K562 (cell line): ENCODE measurements at regions of chr7 and their contacts with region 1.

Region 1: DNA sequence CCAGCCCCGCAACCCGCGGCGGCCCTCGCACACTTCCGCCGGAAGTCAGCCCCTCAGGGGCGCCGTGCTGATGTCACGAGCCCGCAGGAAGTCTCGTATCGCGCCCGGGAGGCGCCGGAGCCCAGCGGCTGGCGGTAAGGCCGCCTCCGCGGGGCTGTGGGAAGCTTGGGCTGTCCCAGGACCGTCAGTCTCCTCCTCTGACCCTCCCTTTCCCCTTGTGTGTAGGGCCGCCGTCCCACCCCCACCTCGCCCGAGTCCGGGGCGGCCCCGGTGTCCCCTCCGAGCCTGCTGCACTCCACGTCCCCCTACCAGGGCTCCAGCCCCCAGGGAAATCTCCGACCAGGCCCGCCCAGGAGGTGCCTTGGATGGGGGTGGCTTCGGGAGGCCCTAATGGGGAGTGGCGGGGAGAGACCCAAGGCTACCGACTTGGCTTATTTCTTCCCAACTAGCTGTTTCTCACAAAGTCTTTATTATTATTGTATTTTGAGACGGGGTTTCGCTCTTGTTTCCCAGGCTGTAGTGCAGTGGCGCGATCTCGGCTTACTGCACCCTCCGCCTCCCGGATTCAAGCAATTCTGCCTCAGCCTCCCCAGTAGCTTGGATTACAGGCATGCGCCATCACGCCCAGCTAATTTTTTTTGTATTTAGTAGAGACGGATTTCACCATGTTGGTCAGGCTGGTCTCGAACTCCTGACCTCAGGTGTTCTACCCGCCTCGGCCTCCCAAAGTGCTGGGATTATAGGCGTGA is at the start of gene ZDHHC4:
- DNase-seq: peak; percentile 93 to 97 (median 96)
- ATAC-seq: peak; percentile 96
- H3K4me3 ChIP-seq: peak within 1 kb of the TSS; percentile 95
- H3K27ac ChIP-seq: peak within 1 kb of the TSS; percentile 96
- H3K4me1 ChIP-seq: peaks cover 13 to 20% of the 10 kb centered on the region in 2 experiments
- H3K27me3 ChIP-seq: peaks cover 0 to 4% of the 10 kb centered on the region in 2 experiments; a peak in 1 of 5 replicates
- CTCF ChIP-seq: 0 out of 6 replicates have a peak, but pooled peaks of 1 of the 3 experiments have one; percentile 9
- EP300 ChIP-seq: peak; percentile 13; the same call in 1 of the 2 replicates
- POLR2A ChIP-seq: peak; percentile 98
- RAD21 ChIP-seq: no peak
- polyA plus RNA-seq, gene ZDHHC4: 58.9 to 77.0 TPM

Region 2: GRCh38 chr7:5117095-5117970 is 1460.2 kb before region 1 on chr7:
- CTCF ChIA-PET with region 1: no interaction called
- POLR2A ChIA-PET with region 1: no interaction called
- in situ Hi-C with region 1: no loop called
- intact Hi-C with region 1: no loop called
- DNase-seq: peak in 1 of 4 experiments; percentile 12
- ATAC-seq: peak; percentile 56
- H3K4me3 ChIP-seq: no peak overlapping the region
- H3K27ac ChIP-seq: no peak overlapping the region
- H3K4me1 ChIP-seq: peaks cover 0 to 12% of the 10 kb centered on the region in 2 experiments; a peak in 2 of 5 replicates
- H3K27me3 ChIP-seq: peaks cover 33 to 62% of the 10 kb centered on the region in 2 experiments
- CTCF ChIP-seq: no peak
- EP300 ChIP-seq: no peak
- POLR2A ChIP-seq: no peak
- RAD21 ChIP-seq: no peak

Region 3: GRCh38 chr7:5172196-5172775 is 1405.3 kb before region 1 on chr7:
- CTCF ChIA-PET with region 1: no interaction called
- POLR2A ChIA-PET with region 1: no interaction called
- in situ Hi-C with region 1: no loop called
- intact Hi-C with region 1: no loop called
- DNase-seq: no peak
- ATAC-seq: no peak
- H3K4me3 ChIP-seq: no peak overlapping the region
- H3K27ac ChIP-seq: no peak overlapping the region
- H3K4me1 ChIP-seq: no peaks in the 10 kb centered on the region
- H3K27me3 ChIP-seq: peaks cover 6 to 36% of the 10 kb centered on the region in 2 experiments; a peak in 4 of 5 replicates
- CTCF ChIP-seq: no peak
- EP300 ChIP-seq: no peak
- POLR2A ChIP-seq: no peak
- RAD21 ChIP-seq: no peak

Region 4: GRCh38 chr7:6205971-6206660 is 371.4 kb before region 1 on chr7:
- CTCF ChIA-PET with region 1: no interaction called
- POLR2A ChIA-PET with region 1: no interaction called
- in situ Hi-C with region 1: no loop called
- intact Hi-C with region 1: no loop called
- DNase-seq: no peak
- ATAC-seq: peak; percentile 60; the same call in 2 of the 3 replicates
- H3K4me3 ChIP-seq: no peak overlapping the region
- H3K27ac ChIP-seq: no peak overlapping the region
- H3K4me1 ChIP-seq: peaks cover 5 to 9% of the 10 kb centered on the region in 2 experiments; a peak in 3 of 5 replicates
- H3K27me3 ChIP-seq: no peaks in the 10 kb centered on the region
- CTCF ChIP-seq: no peak
- EP300 ChIP-seq: no peak
- POLR2A ChIP-seq: no peak
- RAD21 ChIP-seq: no peak

Region 5: GRCh38 chr7:6589829-6590644 is 12.5 kb after region 1 on chr7 and contains the start of gene INTS15:
- CTCF ChIA-PET with region 1: no interaction called
- POLR2A ChIA-PET with region 1: interaction called, 19 read pairs
- in situ Hi-C with region 1: no loop called
- intact Hi-C with region 1: no loop called
- DNase-seq: peak; percentile 89 to 94 (median 92)
- ATAC-seq: peak; percentile 90
- H3K4me3 ChIP-seq: peak within 1 kb of the TSS; percentile 98
- H3K27ac ChIP-seq: peak within 1 kb of the TSS; percentile 80
- H3K4me1 ChIP-seq: peaks cover 7 to 16% of the 10 kb centered on the region in 2 experiments
- H3K27me3 ChIP-seq: no peaks in the 10 kb centered on the region
- CTCF ChIP-seq: peak; percentile 43 to 89 (median 72); a peak in 5 of 6 replicates
- EP300 ChIP-seq: peak; percentile 23; the same call in 1 of the 2 replicates
- POLR2A ChIP-seq: no peak; the same call in 1 of the 2 replicates
- RAD21 ChIP-seq: peak in 1 of 2 experiments; percentile 44; a peak in 3 of 4 replicates
- polyA plus RNA-seq, gene INTS15: 0.52 to 0.57 TPM